ENCODE measurements at regions of chr12 and their contacts with region 1.

Region 1: GRCh38 chr12:68374307-68374982 is 42.3 kb upstream of the MDM1 start:
- DNase-seq: peak; percentile 48
- H3K4me3 ChIP-seq: no peak overlapping the region
- H3K27ac ChIP-seq: peak overlapping the region in 3 of 4 donors; percentile 7 to 62 (median 46)
- H3K4me1 ChIP-seq: peaks cover 9 to 13% (median 11%) of the 10 kb centered on the region in 4 donors
- H3K27me3 ChIP-seq: no peaks in the 10 kb centered on the region
- CTCF ChIP-seq: no peak
- EP300 ChIP-seq: no peak
- POLR2A ChIP-seq: no peak

Region 2: DNA sequence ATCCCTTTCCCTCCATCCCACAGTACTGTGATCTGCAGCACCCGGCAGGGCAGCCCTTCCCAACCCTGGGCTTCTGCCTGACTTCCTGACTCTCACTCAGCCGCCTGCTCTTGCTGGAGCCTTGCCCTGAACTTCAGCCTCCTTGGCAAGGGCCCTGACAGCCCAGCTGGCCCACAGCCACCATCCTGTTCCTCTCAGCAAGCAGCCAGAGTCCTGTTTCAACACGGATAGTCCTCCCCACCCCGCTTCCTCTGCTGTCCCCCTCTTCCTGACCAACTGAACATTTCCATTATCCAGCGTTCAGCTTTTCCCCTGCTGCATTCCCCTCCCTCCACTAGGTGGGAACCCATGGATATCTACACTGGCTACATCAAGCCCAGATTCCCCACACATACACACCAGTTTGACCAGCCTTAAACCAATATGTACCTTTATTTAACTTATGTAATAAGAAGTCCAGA is 31.7 kb after region 1 on chr12:
- in situ Hi-C with region 1: no loop called
- intact Hi-C with region 1: no loop called
- DNase-seq: peak; percentile 94
- H3K4me3 ChIP-seq: no peak overlapping the region
- H3K27ac ChIP-seq: peak overlapping the region; percentile 83 to 92 (median 89)
- H3K4me1 ChIP-seq: peaks cover 12 to 37% (median 23%) of the 10 kb centered on the region in 4 donors
- H3K27me3 ChIP-seq: no peaks in the 10 kb centered on the region
- CTCF ChIP-seq: peak; percentile 16 to 54 (median 39)
- EP300 ChIP-seq: no peak
- POLR2A ChIP-seq: peak; percentile 6

Region 3: GRCh38 chr12:68428724-68429501 is 54.5 kb after region 1 on chr12:
- in situ Hi-C with region 1: no loop called
- intact Hi-C with region 1: no loop called
- DNase-seq: no peak
- H3K4me3 ChIP-seq: no peak overlapping the region
- H3K27ac ChIP-seq: peak overlapping the region in 2 of 4 donors; percentile 15 to 31
- H3K4me1 ChIP-seq: peaks cover 0 to 38% (median 17%) of the 10 kb centered on the region in 4 donors
- H3K27me3 ChIP-seq: no peaks in the 10 kb centered on the region
- CTCF ChIP-seq: no peak
- EP300 ChIP-seq: no peak
- POLR2A ChIP-seq: no peak

Region 4: GRCh38 chr12:68440068-68440581 is 65.7 kb after region 1 on chr12:
- in situ Hi-C with region 1: loop called in 1 of 4 experiments (anchors 10 kb)
- intact Hi-C with region 1: no loop called
- DNase-seq: no peak
- H3K4me3 ChIP-seq: no peak overlapping the region
- H3K27ac ChIP-seq: peak overlapping the region in 1 of 4 donors; percentile 22
- H3K4me1 ChIP-seq: peaks cover 0 to 14% (median 0%) of the 10 kb centered on the region in 4 donors
- H3K27me3 ChIP-seq: no peaks in the 10 kb centered on the region
- CTCF ChIP-seq: no peak
- EP300 ChIP-seq: no peak
- POLR2A ChIP-seq: no peak